Naive thymus-derived CD4-positive, alpha-beta T cell (primary cell): ENCODE measurements at regions of chr3 and their contacts with region 1.

Region 1: DNA sequence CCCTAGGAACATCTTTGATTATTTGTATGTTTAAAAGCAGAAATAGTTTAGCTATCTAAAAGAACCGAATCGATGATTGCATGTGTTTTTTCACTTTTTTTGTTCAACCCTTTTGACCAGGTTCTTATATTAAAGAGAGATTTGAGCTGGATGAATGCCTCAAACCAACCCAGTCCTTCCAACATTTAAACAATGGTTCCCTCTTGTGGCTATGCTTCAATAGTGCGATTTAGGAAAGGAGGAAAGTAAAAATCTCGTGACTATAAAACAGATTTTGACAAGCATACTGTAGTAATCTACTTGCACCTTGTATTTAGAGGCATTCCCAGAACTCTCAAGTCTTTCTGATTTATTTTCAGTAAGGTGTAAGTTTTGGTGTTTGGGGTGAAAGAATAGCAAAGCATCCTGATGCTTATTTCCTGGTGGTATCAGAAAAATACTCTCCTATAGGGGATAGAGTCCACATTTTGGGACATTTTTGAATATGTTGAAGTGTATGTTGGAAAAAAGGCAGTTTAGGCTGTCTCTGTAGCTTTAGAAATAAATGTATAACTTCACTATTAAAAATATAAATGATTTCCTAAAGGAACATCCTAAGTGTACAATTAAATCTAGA is 159.6 kb upstream of the KCNH8 start:
- DNase-seq: peak in 7 of 9 donors; percentile 32 to 69 (median 51)
- ATAC-seq: peak; percentile 72
- H3K4me3 ChIP-seq: no peak overlapping the region
- H3K4me3 Mint-ChIP-seq: peak overlapping the region in 9 of 10 donors; percentile 65 to 91 (median 77)
- H3K27ac ChIP-seq: no peak overlapping the region
- H3K27ac Mint-ChIP-seq: peak overlapping the region in 6 of 9 donors; percentile 21 to 71 (median 50)
- H3K4me1 ChIP-seq: peaks cover 0 to 7% of the 10 kb centered on the region in 2 donors
- H3K4me1 Mint-ChIP-seq: peaks cover 2 to 31% (median 24%) of the 10 kb centered on the region in 7 donors
- H3K27me3 ChIP-seq: no peaks in the 10 kb centered on the region
- H3K27me3 Mint-ChIP-seq: peaks cover 20 to 31% (median 22%) of the 10 kb centered on the region in 5 donors

Region 2: GRCh38 chr3:17258823-17259436 is 1729.8 kb before region 1 on chr3:
- CTCF ChIA-PET with region 1: interaction called, 3 read pairs
- POLR2A ChIA-PET with region 1: no interaction called
- intact Hi-C with region 1: loop called (anchors 1 to 2 kb)
- DNase-seq: peak in 7 of 9 donors; percentile 7 to 53 (median 36)
- ATAC-seq: no peak
- H3K4me3 ChIP-seq: no peak overlapping the region
- H3K4me3 Mint-ChIP-seq: no peak overlapping the region
- H3K27ac ChIP-seq: no peak overlapping the region
- H3K27ac Mint-ChIP-seq: no peak overlapping the region
- H3K4me1 ChIP-seq: no peaks in the 10 kb centered on the region
- H3K4me1 Mint-ChIP-seq: peaks cover 0 to 2% (median 0%) of the 10 kb centered on the region in 7 donors
- H3K27me3 ChIP-seq: no peaks in the 10 kb centered on the region
- H3K27me3 Mint-ChIP-seq: no peaks in the 10 kb centered on the region

Region 3: DNA sequence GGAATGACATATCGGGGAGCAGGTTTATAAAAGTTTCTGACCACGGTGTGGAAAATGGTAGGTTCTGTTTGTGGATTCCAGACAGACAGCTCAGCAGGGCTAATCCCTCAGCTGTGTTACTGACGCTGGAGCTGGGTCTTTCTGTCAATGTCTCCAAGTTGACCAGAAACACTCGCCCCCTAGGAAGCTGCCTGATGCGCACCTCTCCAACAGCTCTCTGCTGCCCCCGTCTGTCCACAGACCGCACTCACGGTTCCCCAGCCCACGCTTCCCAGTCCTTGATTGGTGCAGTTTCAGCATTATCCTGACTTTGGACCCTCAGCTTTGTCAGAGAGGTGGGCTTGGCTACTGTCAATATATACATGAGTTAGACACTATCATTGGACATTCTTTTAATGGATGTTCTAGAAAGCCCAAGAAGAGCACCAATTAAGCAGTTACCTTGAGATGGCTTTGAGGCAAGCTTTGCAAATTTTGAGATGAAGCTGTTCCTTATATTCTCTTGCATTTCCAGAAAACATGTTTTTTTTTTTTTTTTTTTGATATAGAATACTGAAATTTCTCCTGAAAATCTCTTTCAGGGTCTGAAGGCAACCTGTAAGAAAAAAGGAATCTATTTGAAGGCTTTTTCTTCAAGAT is 1147.4 kb before region 1 on chr3:
- CTCF ChIA-PET with region 1: interaction called, 17 read pairs
- POLR2A ChIA-PET with region 1: no interaction called
- intact Hi-C with region 1: loop called (anchors 1 to 5 kb)
- DNase-seq: peak; percentile 35 to 73 (median 57)
- ATAC-seq: peak; percentile 89
- H3K4me3 ChIP-seq: no peak overlapping the region
- H3K4me3 Mint-ChIP-seq: no peak overlapping the region
- H3K27ac ChIP-seq: no peak overlapping the region
- H3K27ac Mint-ChIP-seq: no peak overlapping the region
- H3K4me1 ChIP-seq: no peaks in the 10 kb centered on the region
- H3K4me1 Mint-ChIP-seq: peaks cover 0 to 2% (median 0%) of the 10 kb centered on the region in 7 donors
- H3K27me3 ChIP-seq: no peaks in the 10 kb centered on the region
- H3K27me3 Mint-ChIP-seq: peaks cover 0 to 8% (median 6%) of the 10 kb centered on the region in 5 donors

Region 4: DNA sequence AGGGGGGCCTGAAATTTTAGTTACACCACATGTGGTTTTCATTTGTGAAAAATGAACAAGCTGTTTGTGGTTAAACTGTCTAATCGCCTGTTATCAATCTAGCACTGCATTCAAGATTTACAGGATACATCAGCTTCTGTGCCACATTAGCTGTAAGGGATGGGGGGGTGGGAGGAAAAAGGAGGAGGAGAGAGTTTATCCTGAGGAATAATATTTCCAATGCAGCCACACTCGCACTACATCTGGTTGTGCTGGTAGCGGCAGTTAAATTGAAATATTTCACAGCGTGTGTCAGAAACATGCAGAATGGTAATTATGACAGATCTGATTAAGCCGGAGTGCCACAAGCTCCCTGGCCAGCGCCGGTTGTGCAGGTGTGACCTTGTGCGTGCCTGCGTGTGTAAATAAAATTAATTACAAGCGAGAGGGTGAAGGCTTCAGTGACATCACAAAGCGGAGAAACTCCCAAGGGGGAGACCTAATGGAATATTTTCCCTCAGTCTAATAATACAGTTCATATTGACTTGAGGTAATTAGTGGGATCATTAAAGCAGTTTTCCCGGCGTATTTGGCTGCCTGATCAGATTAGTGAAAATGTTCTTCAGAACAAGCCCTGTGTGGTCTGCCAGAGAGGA is 619.1 kb before region 1 on chr3:
- CTCF ChIA-PET with region 1: no interaction called
- POLR2A ChIA-PET with region 1: no interaction called
- intact Hi-C with region 1: loop called in 1 of 2 experiments (anchors 5 kb)
- DNase-seq: no peak
- ATAC-seq: no peak
- H3K4me3 ChIP-seq: no peak overlapping the region
- H3K4me3 Mint-ChIP-seq: peak overlapping the region in 9 of 10 donors; percentile 23 to 74 (median 56)
- H3K27ac ChIP-seq: peak overlapping the region; percentile 4
- H3K27ac Mint-ChIP-seq: peak overlapping the region; percentile 26 to 89 (median 78)
- H3K4me1 ChIP-seq: peaks cover 10 to 48% of the 10 kb centered on the region in 2 donors
- H3K4me1 Mint-ChIP-seq: peaks cover 55 to 100% (median 99%) of the 10 kb centered on the region in 7 donors
- H3K27me3 ChIP-seq: no peaks in the 10 kb centered on the region
- H3K27me3 Mint-ChIP-seq: no peaks in the 10 kb centered on the region

Region 5: GRCh38 chr3:18444595-18445400 is 543.9 kb before region 1 on chr3:
- CTCF ChIA-PET with region 1: interaction called, 3 read pairs
- POLR2A ChIA-PET with region 1: no interaction called
- intact Hi-C with region 1: loop called (anchors 1 to 5 kb)
- DNase-seq: peak; percentile 80 to 91 (median 87)
- ATAC-seq: peak; percentile 80
- H3K4me3 ChIP-seq: peak overlapping the region; percentile 99
- H3K4me3 Mint-ChIP-seq: peak overlapping the region; percentile 92 to 100 (median 96)
- H3K27ac ChIP-seq: peak overlapping the region; percentile 97
- H3K27ac Mint-ChIP-seq: peak overlapping the region; percentile 94 to 99 (median 98)
- H3K4me1 ChIP-seq: peaks cover 11 to 19% of the 10 kb centered on the region in 2 donors
- H3K4me1 Mint-ChIP-seq: peaks cover 19 to 52% (median 39%) of the 10 kb centered on the region in 7 donors
- H3K27me3 ChIP-seq: no peaks in the 10 kb centered on the region
- H3K27me3 Mint-ChIP-seq: no peaks in the 10 kb centered on the region

Region 6: DNA sequence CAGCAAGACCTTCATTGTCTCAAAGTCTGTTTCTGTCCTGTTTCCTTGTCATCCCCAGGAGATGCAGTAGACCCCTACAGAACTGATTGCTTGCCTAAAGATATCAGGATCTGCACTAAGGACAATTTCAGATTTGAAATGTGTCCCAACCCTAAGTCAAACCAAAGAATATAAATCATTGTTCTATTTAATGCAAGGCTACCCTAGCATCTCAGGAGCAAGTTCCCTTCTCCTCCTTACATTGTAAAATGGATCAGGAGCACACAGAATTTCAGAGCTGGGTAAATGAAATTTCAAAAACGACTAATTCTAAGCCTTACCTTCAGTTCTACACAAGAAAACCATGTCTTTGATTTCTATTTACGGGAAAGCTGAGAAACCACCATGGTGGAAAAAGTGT is 201.3 kb before region 1 on chr3:
- CTCF ChIA-PET with region 1: interaction called, 5 read pairs
- POLR2A ChIA-PET with region 1: no interaction called
- intact Hi-C with region 1: loop called in 1 of 2 experiments (anchors 5 kb)
- DNase-seq: peak in 2 of 9 donors; percentile 16 to 31
- ATAC-seq: no peak
- H3K4me3 ChIP-seq: no peak overlapping the region
- H3K4me3 Mint-ChIP-seq: no peak overlapping the region
- H3K27ac ChIP-seq: no peak overlapping the region
- H3K27ac Mint-ChIP-seq: peak overlapping the region in 2 of 9 donors; percentile 44 to 48
- H3K4me1 ChIP-seq: no peaks in the 10 kb centered on the region
- H3K4me1 Mint-ChIP-seq: peaks cover under 1 to 34% (median 10%) of the 10 kb centered on the region in 7 donors
- H3K27me3 ChIP-seq: no peaks in the 10 kb centered on the region
- H3K27me3 Mint-ChIP-seq: no peaks in the 10 kb centered on the region